Cardiac septum (tissue), 1 donor: ENCODE measurements at regions of chr12 and their contacts with region 1.

Region 1: DNA sequence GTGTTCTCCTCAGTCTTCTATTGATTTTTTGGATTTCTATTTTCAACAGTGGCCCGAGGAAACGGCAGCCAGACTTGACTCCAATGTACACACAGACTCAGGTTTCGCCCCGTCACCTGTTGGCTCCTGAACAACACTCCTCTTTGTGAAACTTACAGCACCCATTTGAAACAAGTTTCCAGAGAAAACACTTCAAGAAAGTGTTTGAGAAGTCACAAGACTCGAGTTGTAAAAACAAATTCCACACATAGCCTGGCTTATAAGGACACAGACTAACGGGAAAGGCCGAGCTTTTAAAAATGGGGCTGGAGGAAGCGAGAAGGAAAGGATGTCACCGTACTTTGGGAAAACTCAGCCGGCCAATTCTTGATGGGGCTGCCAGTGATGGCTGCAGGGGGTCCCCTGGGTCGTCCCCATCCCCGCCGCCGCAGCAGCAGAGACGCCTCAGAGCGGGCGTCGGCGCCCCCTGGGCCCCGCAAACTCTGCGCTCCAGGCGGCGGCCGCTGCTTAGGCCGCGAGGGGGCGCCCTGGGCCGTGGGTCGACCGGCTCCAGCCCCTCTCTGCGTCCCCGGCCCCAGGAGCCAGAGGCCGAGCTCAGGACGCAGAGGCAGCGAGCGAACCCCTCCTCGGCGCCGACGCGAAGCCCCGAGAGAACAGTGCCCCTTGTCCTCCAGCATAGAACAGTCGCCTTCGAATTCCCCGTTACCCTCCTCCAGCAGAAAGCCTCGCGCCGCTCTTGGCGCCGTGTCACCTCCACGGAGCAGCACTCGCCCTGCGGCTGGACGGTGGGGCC is 106.9 kb downstream of the PRICKLE1 start:
- DNase-seq: peak; percentile 86

Region 2: DNA sequence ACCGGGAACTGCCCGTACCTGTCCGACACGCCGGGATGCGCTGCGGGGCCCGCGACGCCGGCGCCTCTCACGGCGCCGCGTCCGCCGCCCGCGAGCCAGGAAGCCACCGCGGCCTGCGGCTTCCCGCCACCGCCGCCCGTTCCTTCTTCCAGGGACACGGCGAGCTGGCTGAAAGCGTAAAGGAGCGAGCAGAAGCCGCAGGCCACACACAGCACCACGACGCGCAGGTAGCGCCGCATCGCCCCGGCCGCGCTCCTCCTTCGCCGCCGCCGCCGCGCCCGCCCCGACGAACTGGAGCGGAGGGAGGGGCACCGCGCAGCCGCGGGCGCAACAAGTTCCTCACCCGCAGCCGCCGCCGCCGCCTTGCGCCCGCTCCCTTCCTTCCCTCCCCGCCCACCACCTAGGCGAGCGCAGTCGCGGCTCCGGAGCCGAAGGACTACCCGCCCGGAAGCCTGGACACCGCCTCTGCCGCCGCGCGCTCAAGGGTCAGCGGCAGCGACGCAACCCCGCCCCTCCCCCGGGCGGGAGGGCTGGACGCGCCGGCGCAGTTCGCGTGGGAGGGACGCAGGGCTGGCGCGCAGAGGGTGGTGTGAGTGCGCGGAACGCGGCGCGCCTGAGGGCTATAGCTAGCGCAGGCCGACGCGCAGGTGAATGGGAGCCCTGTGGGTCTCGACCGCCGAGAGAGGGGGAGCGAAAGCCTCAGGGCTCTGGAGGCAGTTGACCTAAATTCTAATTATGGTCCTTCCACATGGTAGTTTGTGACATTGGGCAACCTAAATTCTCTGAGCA is 338.0 kb before region 1 on chr12 and contains the start of gene GXYLT1:
- intact Hi-C with region 1: loop called (anchors 10 kb)
- DNase-seq: peak; percentile 96
- total RNA-seq, gene GXYLT1: 6.5 TPM

Region 3: GRCh38 chr12:42568952-42569915 is 86.6 kb after region 1 on chr12:
- intact Hi-C with region 1: loop called (anchors 2 kb)
- DNase-seq: no peak

Region 4: DNA sequence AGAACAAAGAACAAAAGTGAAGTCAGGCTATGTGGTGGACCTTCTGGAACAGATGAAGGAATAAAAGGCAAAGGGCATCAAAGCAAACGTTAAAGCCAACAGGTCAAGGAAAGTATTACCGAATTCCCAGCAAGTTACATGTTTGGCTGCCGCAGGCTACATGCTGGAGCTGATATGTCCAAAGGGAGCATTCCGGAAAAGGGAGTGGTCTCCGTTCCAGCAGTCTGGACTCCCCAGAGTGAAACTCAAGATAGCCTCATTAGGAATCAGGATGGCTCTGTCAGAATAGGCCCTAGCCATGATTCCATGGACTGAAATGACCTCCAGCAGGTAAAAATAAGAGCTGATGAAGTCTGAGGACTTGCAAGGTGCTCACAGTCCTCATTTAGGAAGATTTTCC is 486.7 kb after region 1 on chr12:
- intact Hi-C with region 1: loop called (anchors 5 kb)
- DNase-seq: no peak

Region 5: DNA sequence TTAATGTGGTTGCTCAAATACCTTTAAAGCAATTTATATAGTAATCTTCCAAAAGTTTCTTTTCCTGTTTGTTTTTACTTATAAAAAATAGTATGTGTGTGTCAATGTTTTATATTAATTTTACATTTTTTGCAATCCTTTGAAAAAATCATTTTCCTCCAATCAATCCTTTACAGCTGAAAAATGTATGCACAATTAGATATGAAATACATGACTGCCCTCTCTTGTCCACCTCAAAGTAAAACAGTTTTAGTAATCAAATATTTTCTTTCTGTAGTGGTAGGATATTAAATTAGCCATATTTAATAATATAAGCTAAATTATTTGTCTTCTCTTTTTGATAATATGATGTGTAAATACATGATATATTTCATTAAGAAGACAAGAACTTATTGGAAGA is 799.5 kb after region 1 on chr12:
- intact Hi-C with region 1: loop called (anchors 5 kb)
- DNase-seq: no peak

Region 6: DNA sequence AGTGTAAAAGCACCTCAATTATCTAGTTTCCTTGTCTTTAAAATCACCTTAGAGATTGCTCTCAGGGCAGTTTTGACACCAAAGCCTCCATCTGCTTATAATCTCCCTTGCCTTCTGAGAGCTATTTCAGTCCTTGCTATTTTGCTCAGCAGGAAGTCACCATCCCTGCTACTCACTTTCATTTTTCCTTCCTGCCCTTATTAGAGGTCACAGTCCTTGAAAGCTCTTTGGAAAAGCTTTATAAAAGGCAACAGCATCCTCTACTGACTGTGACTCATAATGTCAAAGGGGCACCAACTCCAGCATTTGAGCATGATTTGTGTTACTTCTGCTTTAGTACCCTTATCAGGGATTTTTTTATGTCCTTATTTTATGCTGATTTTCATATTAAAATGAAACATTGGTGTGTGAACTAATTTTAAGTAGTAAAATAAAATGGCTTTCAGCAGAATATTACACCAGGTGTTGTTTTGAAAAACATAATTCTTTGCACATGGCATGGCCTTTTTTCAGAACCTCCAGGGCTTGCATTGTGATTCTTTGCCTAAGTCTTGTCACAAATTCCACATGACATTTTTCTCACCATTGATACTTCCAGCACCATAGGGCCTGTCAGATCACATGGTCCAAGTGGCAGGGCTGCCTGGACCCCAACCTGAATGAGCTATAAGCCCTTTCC is 856.3 kb after region 1 on chr12:
- intact Hi-C with region 1: loop called (anchors 5 kb)
- DNase-seq: no peak